Activated CD4-positive, alpha-beta T cell treated with anti-CD3 and anti-CD28 coated beads for 36 hours (primary cell): ENCODE measurements at regions of chr13 and their contacts with region 1.

Region 1: DNA sequence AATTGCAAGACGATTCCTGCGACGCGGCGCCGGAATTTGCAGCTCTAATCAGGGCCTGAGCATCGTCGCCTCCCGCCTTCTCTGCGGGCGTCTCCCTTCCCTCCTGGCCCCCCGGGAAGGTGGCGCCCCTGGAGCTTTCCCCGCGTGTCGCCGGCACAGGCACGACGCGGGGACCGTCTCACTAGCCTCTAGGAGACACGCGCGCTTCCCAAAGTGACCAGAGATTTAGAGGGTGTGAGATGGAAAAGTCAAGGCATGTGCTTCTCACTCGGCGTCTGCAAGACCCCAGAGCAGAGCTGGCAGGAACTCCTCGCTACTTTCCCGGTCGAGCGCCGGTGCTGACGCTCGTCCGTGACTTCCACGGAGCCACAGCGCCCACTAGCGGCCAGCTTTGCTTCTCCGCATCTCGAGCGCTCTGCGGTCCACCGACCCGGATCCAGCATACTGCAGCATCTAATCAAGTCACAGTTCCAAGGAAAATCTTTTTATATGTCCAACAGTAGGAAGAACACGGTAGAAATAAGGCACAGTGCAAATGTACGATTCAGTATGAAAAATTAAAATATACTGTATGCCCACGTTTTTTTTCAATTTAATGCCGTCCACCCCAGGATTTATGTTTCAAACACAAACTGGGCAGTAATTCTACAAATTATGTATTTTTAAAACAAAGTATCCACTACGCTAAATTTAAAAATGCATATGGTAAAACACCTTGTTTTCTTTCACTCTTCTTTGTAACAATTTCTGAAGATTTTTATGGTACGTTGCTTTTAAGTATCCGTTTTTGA is 977 bp upstream of the EFNB2 start:
- DNase-seq: peak; percentile 93
- ATAC-seq: peak; percentile 32
- H3K4me3 Mint-ChIP-seq: peak overlapping the region; percentile 79
- H3K27ac Mint-ChIP-seq: peak overlapping the region; percentile 55
- H3K4me1 Mint-ChIP-seq: peaks cover 19% of the 10 kb centered on the region
- H3K27me3 Mint-ChIP-seq: peaks cover 25% of the 10 kb centered on the region

Region 2: DNA sequence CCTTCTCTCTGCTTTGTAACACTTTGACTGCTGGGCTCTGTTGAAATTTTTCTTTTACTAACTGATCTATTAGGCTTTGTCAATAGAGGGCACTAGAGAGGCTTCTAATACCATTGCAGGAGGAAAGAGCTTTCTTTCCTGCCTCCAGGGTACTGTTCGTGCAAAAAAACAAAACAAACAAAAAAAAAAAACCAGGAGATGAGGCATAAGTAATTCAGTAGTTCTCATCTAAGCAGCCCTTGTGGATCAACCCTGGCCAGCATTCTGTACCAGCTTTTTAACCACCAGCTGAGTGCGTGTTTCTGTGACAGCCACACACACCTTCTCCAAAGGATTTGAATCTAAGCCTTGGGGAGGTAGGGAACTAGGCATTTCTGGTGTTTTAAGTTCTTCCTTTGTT is 1762.7 kb before region 1 on chr13:
- CTCF ChIA-PET with region 1: interaction called, 3 read pairs
- POLR2A ChIA-PET with region 1: no interaction called
- intact Hi-C with region 1: loop called in 1 of 2 experiments (anchors 1 kb)
- DNase-seq: no peak
- ATAC-seq: peak; percentile 44
- H3K4me3 Mint-ChIP-seq: no peak overlapping the region
- H3K27ac Mint-ChIP-seq: no peak overlapping the region
- H3K4me1 Mint-ChIP-seq: no peaks in the 10 kb centered on the region
- H3K27me3 Mint-ChIP-seq: no peaks in the 10 kb centered on the region

Region 3: GRCh38 chr13:105139380-105140285 is 1396.8 kb before region 1 on chr13:
- CTCF ChIA-PET with region 1: interaction called, 6 read pairs
- POLR2A ChIA-PET with region 1: no interaction called
- intact Hi-C with region 1: loop called in 1 of 2 experiments (anchors 5 kb)
- DNase-seq: peak; percentile 75
- ATAC-seq: peak; percentile 91
- H3K4me3 Mint-ChIP-seq: peak overlapping the region; percentile 73
- H3K27ac Mint-ChIP-seq: peak overlapping the region; percentile 93
- H3K4me1 Mint-ChIP-seq: peaks cover 17% of the 10 kb centered on the region
- H3K27me3 Mint-ChIP-seq: no peaks in the 10 kb centered on the region

Region 4: GRCh38 chr13:105908586-105908985 is 627.9 kb before region 1 on chr13:
- CTCF ChIA-PET with region 1: no interaction called
- POLR2A ChIA-PET with region 1: no interaction called
- intact Hi-C with region 1: loop called in 1 of 2 experiments (anchors 10 kb)
- DNase-seq: peak; percentile 60
- ATAC-seq: peak; percentile 79
- H3K4me3 Mint-ChIP-seq: no peak overlapping the region
- H3K27ac Mint-ChIP-seq: no peak overlapping the region
- H3K4me1 Mint-ChIP-seq: peaks cover 14% of the 10 kb centered on the region
- H3K27me3 Mint-ChIP-seq: peaks cover 17% of the 10 kb centered on the region

Region 5: GRCh38 chr13:106490569-106491321 is 45.7 kb before region 1 on chr13:
- CTCF ChIA-PET with region 1: interaction called, 3 read pairs
- POLR2A ChIA-PET with region 1: no interaction called
- intact Hi-C with region 1: loop called in 1 of 2 experiments (anchors 2 kb)
- DNase-seq: peak; percentile 23
- ATAC-seq: peak; percentile 33
- H3K4me3 Mint-ChIP-seq: peak overlapping the region; percentile 43
- H3K27ac Mint-ChIP-seq: no peak overlapping the region
- H3K4me1 Mint-ChIP-seq: peaks cover 26% of the 10 kb centered on the region
- H3K27me3 Mint-ChIP-seq: peaks cover 55% of the 10 kb centered on the region

Region 6: DNA sequence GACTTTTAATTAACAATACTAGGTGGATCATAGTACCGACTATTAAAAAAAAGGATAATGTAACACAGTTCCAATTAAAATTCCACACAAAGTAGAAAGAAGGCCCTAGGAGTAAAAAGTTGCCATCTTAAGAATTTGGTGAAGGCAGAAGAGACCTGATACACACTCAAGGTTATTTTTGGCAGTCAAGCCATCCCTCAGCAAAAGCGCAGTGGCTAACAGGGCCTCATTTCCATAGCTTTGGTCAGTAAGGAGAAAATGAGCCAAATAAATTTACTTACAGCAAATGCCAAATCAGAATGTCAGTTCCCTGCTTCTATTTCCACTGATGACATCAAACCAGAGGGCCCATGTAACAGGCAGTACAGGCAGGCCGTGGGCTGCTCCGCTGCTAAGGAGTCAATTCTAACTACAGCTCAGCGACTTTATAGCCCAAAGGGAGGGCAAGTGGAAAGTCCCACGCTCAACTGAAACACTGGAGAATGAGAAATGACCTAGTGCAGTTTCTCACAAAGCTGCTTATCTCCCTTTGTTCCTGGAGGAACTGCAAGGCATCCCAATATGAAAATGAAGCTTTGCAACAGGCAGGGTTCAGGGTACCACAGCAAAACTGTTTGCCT is 25.2 kb after region 1 on chr13:
- CTCF ChIA-PET with region 1: interaction called, 36 read pairs
- POLR2A ChIA-PET with region 1: no interaction called
- intact Hi-C with region 1: loop called in 1 of 2 experiments (anchors 2 kb)
- DNase-seq: peak; percentile 80
- ATAC-seq: peak; percentile 87
- H3K4me3 Mint-ChIP-seq: no peak overlapping the region
- H3K27ac Mint-ChIP-seq: peak overlapping the region; percentile 68
- H3K4me1 Mint-ChIP-seq: peaks cover 67% of the 10 kb centered on the region
- H3K27me3 Mint-ChIP-seq: no peaks in the 10 kb centered on the region

Region 7: GRCh38 chr13:106619688-106620555 is 83.5 kb after region 1 on chr13:
- CTCF ChIA-PET with region 1: interaction called, 9 read pairs
- POLR2A ChIA-PET with region 1: no interaction called
- intact Hi-C with region 1: loop called (anchors 1 to 5 kb)
- DNase-seq: peak; percentile 34
- ATAC-seq: peak; percentile 87
- H3K4me3 Mint-ChIP-seq: no peak overlapping the region
- H3K27ac Mint-ChIP-seq: no peak overlapping the region
- H3K4me1 Mint-ChIP-seq: no peaks in the 10 kb centered on the region
- H3K27me3 Mint-ChIP-seq: peaks cover 12% of the 10 kb centered on the region